Esophagus muscularis mucosa (tissue), 4 donors: ENCODE measurements at regions of chr15 and their contacts with region 1.

Region 1: DNA sequence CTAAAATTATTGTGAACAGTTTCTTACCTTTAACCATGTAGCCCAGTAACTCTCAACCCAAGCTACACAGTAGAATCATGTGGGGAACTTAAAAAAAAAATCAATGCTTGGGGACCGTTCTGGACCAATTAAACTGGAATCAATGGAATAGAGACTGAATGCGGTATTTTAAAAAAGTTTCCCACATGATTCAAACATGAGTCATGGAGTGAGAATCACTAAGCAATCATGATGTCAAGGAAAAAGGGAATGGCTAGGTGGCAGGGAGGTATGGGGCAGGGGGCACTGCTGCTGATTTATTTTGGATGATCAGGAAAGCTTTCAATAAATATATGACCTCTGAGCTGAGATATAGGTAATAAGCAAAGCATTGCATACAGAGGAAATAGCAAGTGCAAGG is 250.5 kb upstream of the RORA start:
- DNase-seq: no peak
- H3K4me3 ChIP-seq: no peak overlapping the region
- H3K27ac ChIP-seq: no peak overlapping the region
- H3K4me1 ChIP-seq: no peaks in the 10 kb centered on the region
- H3K27me3 ChIP-seq: no peaks in the 10 kb centered on the region
- CTCF ChIP-seq: no peak
- EP300 ChIP-seq: no peak
- POLR2A ChIP-seq: no peak

Region 2: GRCh38 chr15:61530779-61531178 is 51.2 kb after region 1 on chr15:
- intact Hi-C with region 1: loop called (anchors 10 kb)
- DNase-seq: no peak
- H3K4me3 ChIP-seq: no peak overlapping the region
- H3K27ac ChIP-seq: no peak overlapping the region
- H3K4me1 ChIP-seq: no peaks in the 10 kb centered on the region
- H3K27me3 ChIP-seq: no peaks in the 10 kb centered on the region
- CTCF ChIP-seq: no peak
- EP300 ChIP-seq: no peak
- POLR2A ChIP-seq: no peak